ENCODE measurements at regions of chr17 and their contacts with region 1.

Region 1: DNA sequence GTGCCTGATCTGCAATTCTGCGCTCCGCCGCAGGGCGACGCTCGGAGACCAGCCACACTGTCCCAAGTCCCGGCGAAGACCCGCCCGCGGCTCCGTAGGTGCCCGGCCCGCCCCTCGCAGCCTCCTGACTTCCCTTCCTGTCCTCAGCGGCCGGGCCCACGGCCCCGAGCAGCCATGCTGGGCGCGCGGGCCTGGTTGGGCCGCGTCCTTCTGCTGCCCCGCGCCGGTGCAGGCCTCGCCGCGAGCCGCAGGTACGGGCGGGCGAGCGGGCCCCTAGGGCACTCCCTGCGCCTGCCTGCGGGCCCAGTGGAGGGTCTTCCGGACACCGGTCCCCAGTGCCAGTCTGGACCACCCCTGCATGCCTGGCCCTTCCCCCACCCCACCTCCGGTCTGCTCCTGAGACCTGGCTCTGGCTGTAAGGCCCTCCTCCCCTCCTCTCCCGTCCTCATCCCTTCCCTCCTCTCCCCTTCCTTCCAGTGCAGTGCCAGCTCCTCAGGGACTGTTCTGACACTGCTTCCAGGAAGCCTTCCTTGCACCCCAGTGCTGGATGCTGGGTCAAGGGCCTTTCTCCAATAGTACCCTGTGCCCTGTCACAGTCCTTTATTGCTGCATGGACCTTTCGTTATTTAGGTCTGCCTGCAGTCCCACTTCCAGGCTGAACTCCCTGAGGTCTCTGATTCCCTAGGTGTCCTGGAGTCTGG is at the start of gene SPATA20:
- DNase-seq: peak; percentile 99
- H3K4me3 ChIP-seq: peak within 1 kb of the TSS; percentile 70 to 76
- H3K27ac ChIP-seq: peak within 1 kb of the TSS in 1 of 2 experiments; percentile 78; a peak in 2 of 4 replicates
- H3K4me1 ChIP-seq: peaks cover 7 to 30% of the 10 kb centered on the region in 2 experiments; a peak in 3 of 4 replicates
- H3K27me3 ChIP-seq: no peaks in the 10 kb centered on the region
- CTCF ChIP-seq: peak; percentile 99
- EP300 ChIP-seq: 0 out of 4 replicates have a peak, but pooled peaks of 1 of the 2 experiments have one; percentile 22
- RAD21 ChIP-seq: peak; percentile 100
- polyA plus RNA-seq, gene SPATA20: 92.0 and 106 TPM in 2 replicates

Region 2: GRCh38 chr17:50372758-50373556 is 174.2 kb before region 1 on chr17 and contains the starts of genes EME1 and MRPL27:
- CTCF ChIA-PET with region 1: no interaction called
- POLR2A ChIA-PET with region 1: no interaction called
- DNase-seq: peak; percentile 92
- H3K4me3 ChIP-seq: peak within 1 kb of the TSS; percentile 81 to 94
- H3K27ac ChIP-seq: peak within 1 kb of the TSS; percentile 93 to 96
- H3K4me1 ChIP-seq: peaks cover 0 to 27% of the 10 kb centered on the region in 2 experiments; a peak in 2 of 4 replicates
- H3K27me3 ChIP-seq: no peaks in the 10 kb centered on the region
- CTCF ChIP-seq: no peak
- EP300 ChIP-seq: no peak
- RAD21 ChIP-seq: no peak
- polyA plus RNA-seq, gene EME1: 16.9 and 21.5 TPM in 2 replicates
- polyA plus RNA-seq, gene MRPL27: 266 and 337 TPM in 2 replicates

Region 3: DNA sequence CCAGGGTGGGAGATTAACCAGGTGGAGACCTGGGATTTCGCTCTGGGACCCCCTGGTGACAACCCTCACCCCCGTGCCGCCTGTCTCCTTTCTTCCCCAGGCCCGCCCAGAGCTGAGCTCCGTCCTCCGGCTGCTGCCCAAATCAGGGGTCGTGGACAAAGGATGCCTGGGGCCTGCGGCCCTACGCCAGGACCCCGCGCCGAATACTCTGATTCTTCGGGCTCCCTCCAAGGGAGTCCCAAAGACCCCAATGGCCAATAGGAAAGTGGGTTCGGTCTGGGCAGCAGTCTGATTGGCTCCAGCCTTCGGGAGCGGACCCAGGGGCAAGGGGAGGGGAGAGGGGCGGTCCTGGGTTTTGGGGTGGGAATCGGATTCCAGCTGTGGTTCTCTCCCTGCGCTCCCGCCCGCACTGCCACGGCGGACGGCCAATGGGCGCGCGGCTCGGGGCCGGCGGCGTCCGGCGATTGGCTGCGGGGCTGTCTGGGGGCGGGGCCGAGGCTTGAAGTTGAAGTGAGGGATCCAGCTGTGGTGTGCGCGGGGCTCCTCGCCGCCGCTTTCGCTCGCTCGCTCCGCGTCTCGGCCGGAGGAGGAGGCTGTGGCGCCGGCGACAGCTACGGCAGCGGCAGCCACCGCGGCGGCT is 13.1 kb after region 1 on chr17 and contains the start of gene CACNA1G:
- CTCF ChIA-PET with region 1: interaction called, 127 read pairs
- POLR2A ChIA-PET with region 1: interaction called, 3 read pairs
- DNase-seq: peak; percentile 99
- H3K4me3 ChIP-seq: peak within 1 kb of the TSS; percentile 49 to 74
- H3K27ac ChIP-seq: no peak within 1 kb of the TSS; a peak in 1 of 4 replicates
- H3K4me1 ChIP-seq: peaks cover 14 to 83% of the 10 kb centered on the region in 2 experiments
- H3K27me3 ChIP-seq: peaks cover 31% of the 10 kb centered on the region
- CTCF ChIP-seq: no peak
- EP300 ChIP-seq: no peak
- RAD21 ChIP-seq: peak; percentile 35
- polyA plus RNA-seq, gene CACNA1G: 0.15 and 0.21 TPM in 2 replicates

Region 4: DNA sequence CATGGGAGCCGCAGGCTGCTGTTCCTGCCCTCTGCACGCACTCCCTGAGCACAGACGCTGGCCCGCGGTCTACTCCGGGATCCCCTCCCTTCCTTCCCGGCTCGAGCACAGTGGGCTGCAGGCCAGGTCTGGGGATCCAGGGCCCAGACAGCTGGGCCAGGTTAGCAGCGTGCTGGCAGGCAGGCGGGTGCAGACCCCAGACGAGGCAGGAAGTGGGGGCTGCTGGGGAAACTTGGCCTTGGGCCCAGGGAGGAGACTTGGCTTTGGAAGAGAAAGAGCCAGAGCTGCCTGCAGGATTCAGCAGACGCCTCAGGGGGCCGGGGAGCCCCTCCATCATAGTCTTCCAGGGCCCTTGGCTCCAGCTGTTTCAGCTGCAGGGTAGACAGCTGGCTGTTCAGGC is 57.3 kb after region 1 on chr17:
- CTCF ChIA-PET with region 1: interaction called, 89 read pairs
- POLR2A ChIA-PET with region 1: interaction called, 4 read pairs
- DNase-seq: peak; percentile 99
- H3K4me3 ChIP-seq: no peak overlapping the region
- H3K27ac ChIP-seq: peak overlapping the region in 1 of 2 experiments; percentile 93; a peak in 2 of 4 replicates
- H3K4me1 ChIP-seq: peaks cover 11 to 81% of the 10 kb centered on the region in 2 experiments
- H3K27me3 ChIP-seq: no peaks in the 10 kb centered on the region
- CTCF ChIP-seq: no peak
- EP300 ChIP-seq: peak in 1 of 2 experiments; percentile 84; a peak in 2 of 4 replicates
- RAD21 ChIP-seq: no peak; the same call in 1 of the 2 replicates

Region 5: GRCh38 chr17:50649042-50649904 is 102.1 kb after region 1 on chr17:
- CTCF ChIA-PET with region 1: interaction called, 15 read pairs
- POLR2A ChIA-PET with region 1: no interaction called
- DNase-seq: no peak
- H3K4me3 ChIP-seq: no peak overlapping the region
- H3K27ac ChIP-seq: no peak overlapping the region
- H3K4me1 ChIP-seq: no peaks in the 10 kb centered on the region
- H3K27me3 ChIP-seq: no peaks in the 10 kb centered on the region
- CTCF ChIP-seq: no peak
- EP300 ChIP-seq: no peak
- RAD21 ChIP-seq: no peak

Region 6: DNA sequence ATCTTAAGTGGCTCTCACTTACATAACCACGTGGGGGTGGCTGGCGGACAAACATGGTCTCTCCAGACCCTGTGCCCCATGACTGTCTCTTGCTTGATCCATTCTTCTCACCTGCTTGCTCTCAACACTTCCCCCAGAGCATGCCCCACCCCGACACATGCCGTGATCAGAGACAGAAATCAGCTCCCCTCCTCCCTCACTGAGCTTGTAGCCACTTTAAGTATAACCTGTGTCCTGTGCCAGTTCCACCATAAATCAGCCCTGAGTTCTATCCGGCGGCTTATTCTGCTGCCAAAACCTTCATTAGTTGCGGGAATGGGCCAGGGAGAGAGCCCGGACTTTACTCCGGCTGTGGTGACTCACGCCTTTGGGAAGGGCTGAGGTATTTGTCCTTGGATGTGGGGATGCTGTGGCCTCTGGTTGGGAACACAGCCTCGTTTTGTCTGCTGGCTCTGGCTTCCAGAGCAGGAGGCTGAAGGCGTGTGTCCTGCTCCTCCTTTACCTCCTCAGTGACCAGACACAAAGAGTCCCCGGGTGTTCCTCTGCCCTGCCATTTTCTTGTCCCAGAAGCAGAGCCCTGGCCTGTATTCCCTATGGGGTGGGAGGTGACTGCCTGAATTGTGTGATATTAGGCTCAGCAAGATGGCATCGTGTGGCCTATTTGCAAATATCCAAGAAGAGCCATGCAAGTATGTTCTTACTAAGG is 139.5 kb after region 1 on chr17:
- CTCF ChIA-PET with region 1: interaction called, 356 read pairs
- POLR2A ChIA-PET with region 1: interaction called, 4 read pairs
- DNase-seq: no peak
- H3K4me3 ChIP-seq: no peak overlapping the region
- H3K27ac ChIP-seq: peak overlapping the region; percentile 77 to 85
- H3K4me1 ChIP-seq: peaks cover 26 to 40% of the 10 kb centered on the region in 2 experiments; a peak in 3 of 4 replicates
- H3K27me3 ChIP-seq: no peaks in the 10 kb centered on the region
- CTCF ChIP-seq: no peak
- EP300 ChIP-seq: peak in 1 of 2 experiments; percentile 93; a peak in 1 of 4 replicates
- RAD21 ChIP-seq: no peak

Measured in SK-N-SH (cell line).